OCI-LY7 (cell line): ENCODE measurements at regions of chr18 and their contacts with region 1.

Region 1: DNA sequence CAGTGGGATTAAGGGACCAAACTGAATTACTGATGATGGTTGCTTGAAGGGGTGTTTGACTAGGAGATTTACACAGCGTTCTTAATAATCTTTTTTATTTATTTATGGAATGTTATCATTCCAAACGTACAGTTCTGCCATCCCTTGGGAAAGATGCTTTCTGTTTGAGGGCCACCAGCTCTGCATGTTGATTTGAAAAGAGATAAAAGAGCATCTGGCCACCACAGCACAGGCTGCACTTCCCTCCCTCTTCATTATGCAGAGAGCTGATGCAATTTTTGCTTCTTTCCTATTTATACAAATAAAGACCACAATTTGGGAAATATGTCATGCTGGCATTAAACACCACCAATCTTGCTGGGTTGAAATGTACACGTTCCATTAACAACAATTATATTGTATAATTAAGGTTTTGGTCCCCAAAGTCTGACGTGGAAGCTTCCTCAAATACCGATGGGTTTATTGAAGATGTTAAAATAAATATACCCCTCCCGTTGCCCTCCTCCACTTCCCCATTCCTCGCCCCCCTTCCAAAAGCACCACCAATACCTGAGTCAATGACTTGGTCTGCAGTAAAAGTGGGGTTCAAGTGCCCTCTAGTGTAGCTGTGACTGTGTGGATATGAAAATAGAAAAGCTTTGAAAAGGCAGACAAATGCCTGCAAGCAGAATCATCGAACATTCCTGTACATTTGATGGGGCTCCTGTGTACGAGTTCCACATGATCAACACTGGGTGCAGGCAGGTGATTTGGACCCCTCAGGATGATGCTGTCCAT is 211.9 kb downstream of the HRH4 start:
- DNase-seq: no peak
- H3K4me3 ChIP-seq: no peak overlapping the region
- H3K27ac ChIP-seq: no peak overlapping the region
- H3K4me1 ChIP-seq: no peaks in the 10 kb centered on the region
- CTCF ChIP-seq: peak; percentile 51

Region 2: DNA sequence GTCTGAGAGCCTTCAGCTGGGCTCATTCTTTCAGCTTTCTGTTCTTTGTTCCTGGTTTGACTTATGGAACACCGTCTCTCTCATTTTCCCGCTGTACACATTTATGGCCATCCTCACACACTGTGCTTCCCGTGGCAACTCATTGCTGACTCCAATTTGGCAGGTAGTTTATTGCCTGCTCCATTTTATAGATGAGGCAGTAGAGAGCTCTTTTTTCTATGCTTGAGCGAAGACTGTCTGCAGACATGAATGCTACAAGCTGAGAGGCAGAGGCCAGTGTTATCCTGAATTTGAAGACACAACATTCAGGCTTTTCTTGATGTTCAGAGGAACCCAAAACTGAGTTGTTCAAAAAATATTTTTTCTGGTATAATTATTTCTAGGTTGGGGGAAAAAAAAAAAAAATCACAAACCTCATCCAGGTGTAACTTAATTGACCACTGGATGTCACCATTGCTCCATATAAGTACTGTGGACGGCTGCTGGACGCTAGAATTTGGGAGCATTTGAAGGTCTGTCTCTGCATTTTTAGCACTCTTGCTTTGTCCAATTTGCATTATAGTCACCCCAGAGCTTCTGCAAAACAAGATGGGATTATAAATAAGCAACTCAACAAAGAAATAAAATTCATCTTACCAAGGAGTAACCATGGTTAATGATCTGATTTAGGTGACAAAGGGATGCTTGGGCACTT is 128.4 kb before region 1 on chr18:
- CTCF ChIA-PET with region 1: no interaction called
- POLR2A ChIA-PET with region 1: no interaction called
- intact Hi-C with region 1: loop called (anchors 10 kb)
- DNase-seq: peak; percentile 21
- H3K4me3 ChIP-seq: no peak overlapping the region
- H3K27ac ChIP-seq: no peak overlapping the region
- H3K4me1 ChIP-seq: no peaks in the 10 kb centered on the region
- CTCF ChIP-seq: peak; percentile 81

Region 3: GRCh38 chr18:24600076-24600654 is 72.2 kb before region 1 on chr18:
- CTCF ChIA-PET with region 1: no interaction called
- POLR2A ChIA-PET with region 1: no interaction called
- intact Hi-C with region 1: loop called (anchors 10 kb)
- DNase-seq: peak; percentile 66
- H3K4me3 ChIP-seq: no peak overlapping the region
- H3K27ac ChIP-seq: no peak overlapping the region
- H3K4me1 ChIP-seq: no peaks in the 10 kb centered on the region
- CTCF ChIP-seq: peak; percentile 91